OCI-LY7 (cell line): ENCODE measurements at regions of chr19 and their contacts with region 1.

Region 1: GRCh38 chr19:40662921-40663694 is 27.3 kb downstream of the NUMBL start:
- DNase-seq: peak; percentile 91
- H3K4me3 ChIP-seq: peak overlapping the region; percentile 76
- H3K27ac ChIP-seq: peak overlapping the region; percentile 31
- H3K4me1 ChIP-seq: peaks cover 8% of the 10 kb centered on the region
- CTCF ChIP-seq: peak; percentile 90

Region 2: GRCh38 chr19:40609561-40610395 is 53.3 kb before region 1 on chr19:
- CTCF ChIA-PET with region 1: no interaction called
- POLR2A ChIA-PET with region 1: no interaction called
- intact Hi-C with region 1: no loop called
- DNase-seq: peak; percentile 89
- H3K4me3 ChIP-seq: peak overlapping the region; percentile 76
- H3K27ac ChIP-seq: peak overlapping the region; percentile 70
- H3K4me1 ChIP-seq: peaks cover 42% of the 10 kb centered on the region
- CTCF ChIP-seq: no peak

Region 3: DNA sequence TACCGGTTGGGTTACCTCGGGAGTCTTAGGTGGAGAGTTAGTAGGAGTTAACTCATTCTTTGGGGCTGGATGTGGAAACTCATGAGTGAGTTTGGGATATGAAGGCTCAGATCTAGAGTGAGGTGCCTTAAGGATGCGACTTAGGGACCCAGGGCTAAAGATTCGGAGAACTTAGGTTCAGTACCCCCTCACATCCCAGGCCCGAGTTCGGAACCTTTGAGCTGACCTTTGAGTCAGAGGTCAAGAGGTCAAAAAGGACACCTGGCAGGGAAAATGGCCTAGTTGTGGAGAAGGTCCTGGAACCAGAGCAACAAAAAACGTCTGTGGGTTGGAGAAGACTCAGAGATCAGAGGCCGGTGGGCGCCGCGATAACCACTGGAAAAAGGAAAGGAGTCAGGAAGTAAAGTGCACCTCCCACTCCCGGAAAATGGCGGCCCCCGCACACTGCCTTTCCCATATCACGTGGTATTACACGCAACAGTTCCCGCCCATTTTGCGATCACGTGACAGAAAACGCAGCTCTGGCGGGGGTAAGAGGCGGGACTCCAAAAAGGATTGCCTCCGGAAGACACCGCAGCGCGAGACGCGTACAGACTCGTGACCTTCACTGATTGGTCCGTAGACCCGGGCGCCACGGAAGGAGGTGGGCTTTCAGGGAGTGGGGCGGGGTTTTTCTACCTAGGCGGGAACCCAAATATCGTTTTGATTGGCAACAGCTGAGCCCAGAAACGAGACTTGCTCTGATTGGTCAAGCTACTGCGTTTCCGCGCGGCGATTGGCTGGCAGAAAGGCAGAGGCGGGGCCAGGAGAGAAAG is 87.2 kb after region 1 on chr19 and contains the start of gene ACTMAP:
- CTCF ChIA-PET with region 1: interaction called, 3 read pairs
- POLR2A ChIA-PET with region 1: no interaction called
- intact Hi-C with region 1: loop called (anchors 5 kb)
- DNase-seq: peak; percentile 100
- H3K4me3 ChIP-seq: peak within 1 kb of the TSS; percentile 80
- H3K27ac ChIP-seq: peak within 1 kb of the TSS; percentile 79
- H3K4me1 ChIP-seq: peaks cover 45% of the 10 kb centered on the region
- CTCF ChIP-seq: no peak
- total RNA-seq, gene ACTMAP: 3.3 and 5.0 TPM in 2 replicates

Region 4: DNA sequence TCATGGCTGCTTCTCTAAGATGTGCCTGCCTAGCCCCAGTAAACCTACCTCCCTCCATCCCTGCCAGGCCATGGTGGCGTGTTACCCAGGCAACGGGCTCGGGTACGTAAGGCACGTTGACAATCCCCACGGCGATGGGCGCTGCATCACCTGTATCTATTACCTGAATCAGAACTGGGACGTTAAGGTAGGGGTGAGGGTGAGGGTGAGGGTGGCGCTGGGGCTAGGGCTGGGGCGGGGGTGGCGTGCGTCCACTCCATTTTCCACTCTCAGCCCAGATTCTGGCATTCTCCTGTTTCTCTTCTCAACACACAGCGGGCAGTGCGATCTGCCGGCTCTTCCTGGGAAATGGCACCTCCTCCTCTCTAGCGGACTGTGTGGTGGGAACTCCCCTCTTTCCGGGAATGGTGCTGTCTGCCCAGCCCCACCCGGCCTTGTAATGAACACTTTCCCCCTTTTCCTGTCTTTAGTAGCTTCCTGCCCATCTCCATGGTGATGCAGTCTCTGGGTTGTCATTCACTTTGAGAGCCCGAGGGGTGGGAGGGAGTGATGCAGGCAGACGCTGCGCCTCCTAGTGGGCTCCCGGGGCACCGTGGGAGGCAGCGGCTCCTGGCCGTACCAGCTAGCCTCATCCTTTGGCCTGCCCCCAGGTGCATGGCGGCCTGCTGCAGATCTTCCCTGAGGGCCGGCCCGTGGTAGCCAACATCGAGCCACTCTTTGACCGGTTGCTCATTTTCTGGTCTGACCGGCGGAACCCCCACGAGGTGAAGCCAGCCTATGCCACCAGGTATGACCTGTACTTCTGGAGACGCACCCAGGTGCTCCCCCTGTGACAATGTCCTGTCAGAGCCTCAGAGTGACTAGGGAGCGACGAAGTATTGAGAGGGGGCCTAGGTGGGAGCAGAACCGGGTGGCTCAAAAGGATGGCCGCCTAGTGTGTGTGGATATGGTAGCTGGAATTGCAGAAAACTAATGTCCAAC is 143.7 kb after region 1 on chr19:
- CTCF ChIA-PET with region 1: no interaction called
- POLR2A ChIA-PET with region 1: no interaction called
- intact Hi-C with region 1: loop called (anchors 1 kb)
- DNase-seq: peak; percentile 81
- H3K4me3 ChIP-seq: no peak overlapping the region
- H3K27ac ChIP-seq: peak overlapping the region; percentile 81
- H3K4me1 ChIP-seq: peaks cover 66% of the 10 kb centered on the region
- CTCF ChIP-seq: peak; percentile 92

Region 5: GRCh38 chr19:40822161-40822560 is 159.1 kb after region 1 on chr19:
- CTCF ChIA-PET with region 1: interaction called, 3 read pairs
- POLR2A ChIA-PET with region 1: interaction called, 3 read pairs
- intact Hi-C with region 1: loop called (anchors 1 kb)
- DNase-seq: no peak
- H3K4me3 ChIP-seq: no peak overlapping the region
- H3K27ac ChIP-seq: no peak overlapping the region
- H3K4me1 ChIP-seq: peaks cover 22% of the 10 kb centered on the region
- CTCF ChIP-seq: no peak

Region 6: DNA sequence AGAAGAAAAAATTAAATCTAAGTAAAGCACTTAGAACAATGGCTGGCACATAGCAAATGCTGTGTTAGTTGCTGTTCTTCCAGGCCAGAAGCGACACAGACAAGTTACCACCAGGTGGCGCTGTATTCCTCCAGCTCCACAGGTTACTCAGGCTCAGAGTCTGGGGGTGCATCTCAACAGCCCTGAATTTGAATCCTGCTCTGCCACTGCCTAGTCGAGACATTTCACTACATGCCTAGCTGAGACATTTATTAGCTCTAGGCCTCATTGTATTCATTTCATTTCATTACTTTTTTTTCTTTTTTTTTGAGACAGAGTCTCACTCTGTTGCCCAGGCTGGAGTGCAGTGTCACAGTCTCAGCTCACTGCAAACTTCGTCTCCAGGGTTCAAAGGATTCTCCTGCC is 311.5 kb after region 1 on chr19:
- CTCF ChIA-PET with region 1: no interaction called
- POLR2A ChIA-PET with region 1: no interaction called
- intact Hi-C with region 1: loop called (anchors 5 kb)
- DNase-seq: peak; percentile 75
- H3K4me3 ChIP-seq: no peak overlapping the region
- H3K27ac ChIP-seq: no peak overlapping the region
- H3K4me1 ChIP-seq: no peaks in the 10 kb centered on the region
- CTCF ChIP-seq: peak; percentile 86

Region 7: GRCh38 chr19:41144403-41144802 is 481.3 kb after region 1 on chr19:
- CTCF ChIA-PET with region 1: no interaction called
- POLR2A ChIA-PET with region 1: no interaction called
- intact Hi-C with region 1: loop called (anchors 2 kb)
- DNase-seq: peak; percentile 74
- H3K4me3 ChIP-seq: no peak overlapping the region
- H3K27ac ChIP-seq: no peak overlapping the region
- H3K4me1 ChIP-seq: no peaks in the 10 kb centered on the region
- CTCF ChIP-seq: peak; percentile 85